Right ventricle myocardium inferior (tissue), 1 donor: ENCODE measurements at regions of chr21 and their contacts with region 1.

Region 1: DNA sequence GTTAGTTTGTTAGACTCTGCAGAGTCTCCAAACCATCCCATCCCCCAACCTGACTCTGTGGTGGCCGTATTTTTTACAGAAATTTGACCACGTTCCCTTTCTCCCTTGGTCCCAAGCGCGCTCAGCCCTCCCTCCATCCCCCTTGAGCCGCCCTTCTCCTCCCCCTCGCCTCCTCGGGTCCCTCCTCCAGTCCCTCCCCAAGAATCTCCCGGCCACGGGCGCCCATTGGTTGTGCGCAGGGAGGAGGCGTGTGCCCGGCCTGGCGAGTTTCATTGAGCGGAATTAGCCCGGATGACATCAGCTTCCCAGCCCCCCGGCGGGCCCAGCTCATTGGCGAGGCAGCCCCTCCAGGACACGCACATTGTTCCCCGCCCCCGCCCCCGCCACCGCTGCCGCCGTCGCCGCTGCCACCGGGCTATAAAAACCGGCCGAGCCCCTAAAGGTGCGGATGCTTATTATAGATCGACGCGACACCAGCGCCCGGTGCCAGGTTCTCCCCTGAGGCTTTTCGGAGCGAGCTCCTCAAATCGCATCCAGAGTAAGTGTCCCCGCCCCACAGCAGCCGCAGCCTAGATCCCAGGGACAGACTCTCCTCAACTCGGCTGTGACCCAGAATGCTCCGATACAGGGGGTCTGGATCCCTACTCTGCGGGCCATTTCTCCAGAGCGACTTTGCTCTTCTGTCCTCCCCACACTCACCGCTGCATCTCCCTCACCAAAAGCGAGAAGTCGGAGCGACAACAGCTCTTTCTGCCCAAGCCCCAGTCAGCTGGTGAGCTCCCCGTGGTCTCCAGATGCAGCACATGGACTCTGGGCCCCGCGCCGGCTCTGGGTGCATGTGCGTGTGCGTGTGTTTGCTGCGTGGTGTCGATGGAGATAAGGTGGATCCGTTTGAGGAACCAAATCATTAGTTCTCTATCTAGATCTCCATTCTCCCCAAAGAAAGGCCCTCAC is at the start of gene OLIG2:
- DNase-seq: no peak
- ATAC-seq: no peak
- total RNA-seq, gene OLIG2: not detected

Region 2: DNA sequence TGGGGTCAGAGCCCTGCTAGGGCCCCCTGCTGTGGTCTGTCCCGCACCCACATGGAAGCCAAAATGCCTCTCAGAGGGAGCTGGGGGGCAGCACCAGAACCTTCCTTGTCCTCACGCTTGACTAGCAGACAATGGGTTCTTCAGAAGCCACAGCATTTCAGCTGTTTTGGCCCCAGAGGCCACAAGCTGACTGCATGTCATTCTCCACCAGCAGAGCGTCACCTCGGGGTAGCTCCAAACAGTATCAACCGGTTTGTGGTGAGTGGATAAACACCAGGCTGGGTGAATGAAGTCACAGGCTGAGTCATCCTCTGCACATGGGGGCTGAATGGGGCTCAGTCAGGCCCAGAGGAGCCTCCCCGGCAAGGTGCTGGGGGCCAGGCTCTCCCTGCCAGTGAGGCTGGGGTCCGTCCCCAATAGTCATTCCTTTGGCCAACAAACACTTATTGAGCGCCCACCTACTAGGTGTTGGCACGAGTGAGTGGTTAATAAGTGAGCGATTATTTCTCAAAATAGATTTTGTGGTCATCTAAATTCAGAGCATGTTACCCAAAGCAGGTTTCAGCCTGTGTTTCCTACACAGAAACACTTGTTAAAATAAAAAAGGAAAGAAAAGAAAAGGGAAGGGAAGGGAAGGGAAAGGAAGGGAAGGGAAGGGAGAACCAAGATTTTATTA is 53.3 kb after region 1 on chr21:
- intact Hi-C with region 1: loop called (anchors 10 kb)
- DNase-seq: no peak
- ATAC-seq: no peak